ENCODE measurements at regions of chr2 and their contacts with region 1.

Region 1: GRCh38 chr2:42859006-42859552 is 66.7 kb upstream of the HAAO start:
- DNase-seq: peak; percentile 84
- H3K4me3 Mint-ChIP-seq: no peak overlapping the region
- H3K27ac Mint-ChIP-seq: no peak overlapping the region
- H3K4me1 Mint-ChIP-seq: peaks cover 8% of the 10 kb centered on the region
- H3K27me3 Mint-ChIP-seq: no peaks in the 10 kb centered on the region
- CTCF ChIP-seq: peak; percentile 82

Region 2: GRCh38 chr2:42128721-42129486 is 730.2 kb before region 1 on chr2:
- CTCF ChIA-PET with region 1: interaction called, 12 read pairs
- intact Hi-C with region 1: no loop called
- DNase-seq: peak; percentile 25
- H3K4me3 Mint-ChIP-seq: peak overlapping the region; percentile 19
- H3K27ac Mint-ChIP-seq: peak overlapping the region; percentile 37
- H3K4me1 Mint-ChIP-seq: peaks cover 72% of the 10 kb centered on the region
- H3K27me3 Mint-ChIP-seq: no peaks in the 10 kb centered on the region
- CTCF ChIP-seq: no peak

Region 3: DNA sequence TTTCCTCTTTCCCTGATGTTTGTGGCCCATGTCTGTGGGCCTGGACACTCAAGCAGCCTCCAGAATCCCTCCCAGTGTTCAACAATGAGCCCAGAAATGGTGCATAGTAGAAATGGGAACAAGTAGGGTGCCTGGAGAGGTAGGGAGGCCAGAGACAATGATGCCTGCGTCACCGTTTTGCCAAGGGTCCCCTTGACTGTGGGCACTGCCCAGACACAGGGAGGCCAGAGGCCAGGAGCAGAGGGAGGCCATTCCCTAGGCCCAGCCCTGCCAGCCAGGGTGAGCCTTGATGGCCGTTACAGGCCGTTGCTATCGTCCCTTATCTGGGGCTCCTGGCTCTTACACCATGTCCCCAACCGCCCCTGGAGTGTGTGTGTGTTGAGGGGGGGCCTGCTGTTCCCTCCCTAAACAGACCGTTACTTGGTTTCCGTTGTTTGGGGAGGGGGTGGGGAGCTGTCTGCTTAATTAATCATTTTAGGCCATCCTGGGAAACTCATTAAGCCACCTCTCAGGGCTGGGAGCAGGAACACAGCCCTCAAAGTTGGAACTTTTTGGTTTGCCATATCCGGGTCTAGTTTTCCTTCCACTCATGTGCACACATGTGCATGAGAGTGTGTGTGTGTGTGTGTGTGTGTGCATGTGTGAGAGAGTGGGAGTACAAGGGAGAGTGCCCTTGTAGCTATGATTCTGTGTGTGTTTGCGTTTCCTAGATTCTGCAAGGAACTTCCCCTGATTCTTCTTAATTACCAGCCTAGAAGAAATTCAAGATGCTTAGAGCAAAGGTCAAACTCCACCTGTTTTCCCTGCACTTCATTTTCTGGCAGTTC is 68.5 kb after region 1 on chr2:
- CTCF ChIA-PET with region 1: no interaction called
- intact Hi-C with region 1: loop called (anchors 1 kb)
- DNase-seq: no peak
- H3K4me3 Mint-ChIP-seq: no peak overlapping the region
- H3K27ac Mint-ChIP-seq: no peak overlapping the region
- H3K4me1 Mint-ChIP-seq: peaks cover 37% of the 10 kb centered on the region
- H3K27me3 Mint-ChIP-seq: no peaks in the 10 kb centered on the region
- CTCF ChIP-seq: no peak

Region 4: DNA sequence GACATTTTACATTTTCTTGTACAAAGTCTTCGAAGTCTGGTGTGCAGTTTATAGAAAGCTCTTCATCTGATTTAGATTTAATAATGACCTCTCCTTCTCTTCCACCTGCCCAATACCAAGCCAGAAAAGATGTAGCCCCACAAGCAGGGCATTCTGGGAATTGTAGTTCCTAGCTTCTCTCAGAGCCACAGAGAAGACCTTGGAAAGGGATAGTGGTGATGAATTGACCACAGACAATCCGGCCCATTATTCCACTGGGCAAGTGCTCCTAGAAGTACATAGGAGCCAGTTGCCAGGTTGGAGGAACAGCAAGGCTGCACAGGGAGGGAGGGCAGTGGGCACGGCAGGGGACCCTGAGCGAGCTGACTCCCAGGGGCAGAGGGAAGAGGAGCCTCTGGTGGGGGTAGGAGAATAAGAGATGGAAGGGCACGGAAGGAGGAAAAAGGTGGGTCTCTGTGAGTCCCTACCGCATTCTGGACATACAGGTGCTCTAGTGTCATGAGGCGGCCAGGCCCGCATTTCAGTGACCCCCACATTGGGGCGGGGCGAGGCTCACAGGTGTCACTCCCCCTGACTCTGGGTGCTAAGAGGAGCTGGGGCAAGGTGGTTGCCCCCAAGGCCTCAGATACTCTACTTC is 85.8 kb after region 1 on chr2:
- CTCF ChIA-PET with region 1: no interaction called
- intact Hi-C with region 1: loop called (anchors 2 kb)
- DNase-seq: no peak
- H3K4me3 Mint-ChIP-seq: no peak overlapping the region
- H3K27ac Mint-ChIP-seq: no peak overlapping the region
- H3K4me1 Mint-ChIP-seq: peaks cover 29% of the 10 kb centered on the region
- H3K27me3 Mint-ChIP-seq: no peaks in the 10 kb centered on the region
- CTCF ChIP-seq: no peak

Measured in Calu3 (cell line).